SK-N-SH (cell line): ENCODE measurements at regions of chr15 and their contacts with region 1.

Region 1: GRCh38 chr15:79431636-79432344 is at the start of gene MINAR1:
- DNase-seq: peak; percentile 84
- H3K4me3 ChIP-seq: peak within 1 kb of the TSS; percentile 48 to 68
- H3K27ac ChIP-seq: no peak within 1 kb of the TSS
- H3K4me1 ChIP-seq: peaks cover 0 to 7% of the 10 kb centered on the region in 2 experiments; a peak in 1 of 4 replicates
- H3K27me3 ChIP-seq: 0 out of 2 replicates have a peak, but pooled peaks cover 7% of the 10 kb centered on the region
- CTCF ChIP-seq: peak; percentile 42
- EP300 ChIP-seq: no peak
- RAD21 ChIP-seq: peak; percentile 35; the same call in 1 of the 2 replicates
- polyA plus RNA-seq, gene MINAR1: 0.35 and 0.39 TPM in 2 replicates

Region 2: DNA sequence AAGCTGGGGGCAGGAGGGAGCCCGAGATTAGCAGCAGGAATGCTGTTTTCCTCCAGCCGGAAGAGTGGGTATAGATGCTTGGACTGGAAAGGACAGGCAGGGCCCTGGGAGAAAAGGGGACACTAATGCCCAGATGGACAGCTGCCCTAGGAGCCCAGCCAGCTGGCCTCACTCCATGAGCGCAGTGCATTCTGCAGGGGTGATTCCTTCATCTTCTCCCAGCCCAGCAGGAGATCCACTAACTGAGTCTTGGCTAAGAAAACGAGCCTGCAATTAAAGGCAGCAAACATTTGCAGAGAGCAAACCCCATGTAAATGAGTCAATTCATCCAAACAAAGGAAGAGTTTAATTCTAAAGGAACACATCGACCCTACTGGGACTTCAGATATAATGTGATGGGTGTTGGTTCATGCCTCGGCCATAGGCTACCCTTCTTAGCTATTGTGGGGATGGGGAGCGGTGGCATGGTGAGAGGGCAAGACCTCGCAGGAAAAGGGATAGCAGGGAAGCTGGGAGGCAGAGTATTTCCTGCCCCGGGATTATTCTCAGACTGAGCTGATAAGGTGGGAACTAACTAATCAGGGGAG is 13.0 kb before region 1 on chr15:
- CTCF ChIA-PET with region 1: interaction called, 27 read pairs
- POLR2A ChIA-PET with region 1: no interaction called
- DNase-seq: no peak
- H3K4me3 ChIP-seq: no peak overlapping the region
- H3K27ac ChIP-seq: no peak overlapping the region
- H3K4me1 ChIP-seq: no peaks in the 10 kb centered on the region; a peak in 1 of 4 replicates
- H3K27me3 ChIP-seq: no peaks in the 10 kb centered on the region
- CTCF ChIP-seq: no peak
- EP300 ChIP-seq: no peak
- RAD21 ChIP-seq: no peak

Region 3: DNA sequence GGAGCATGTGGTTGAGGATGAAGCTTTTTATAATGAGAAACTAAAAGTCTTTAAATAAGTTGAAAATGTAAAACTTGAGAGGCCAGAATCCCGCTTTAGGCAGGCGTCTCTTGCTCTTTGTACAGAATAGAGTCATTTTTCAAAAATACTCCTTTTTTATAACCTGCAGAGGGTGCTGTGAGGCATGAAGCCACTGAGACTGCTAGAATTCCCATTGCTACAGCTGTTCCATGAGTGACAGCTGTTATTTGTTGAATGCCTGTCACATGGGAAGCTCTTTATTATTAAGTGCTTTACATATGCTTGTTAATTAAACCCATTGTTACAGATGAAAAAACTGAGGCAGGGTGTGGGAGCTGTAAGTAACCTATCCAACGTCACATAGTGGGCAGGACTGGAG is 18.9 kb after region 1 on chr15:
- CTCF ChIA-PET with region 1: interaction called, 10 read pairs
- POLR2A ChIA-PET with region 1: no interaction called
- DNase-seq: peak; percentile 30
- H3K4me3 ChIP-seq: no peak overlapping the region
- H3K27ac ChIP-seq: no peak overlapping the region
- H3K4me1 ChIP-seq: no peaks in the 10 kb centered on the region
- H3K27me3 ChIP-seq: no peaks in the 10 kb centered on the region
- CTCF ChIP-seq: peak; percentile 49
- EP300 ChIP-seq: no peak
- RAD21 ChIP-seq: peak; percentile 53